ENCODE measurements at regions of chr7 and their contacts with region 1.

Region 1: DNA sequence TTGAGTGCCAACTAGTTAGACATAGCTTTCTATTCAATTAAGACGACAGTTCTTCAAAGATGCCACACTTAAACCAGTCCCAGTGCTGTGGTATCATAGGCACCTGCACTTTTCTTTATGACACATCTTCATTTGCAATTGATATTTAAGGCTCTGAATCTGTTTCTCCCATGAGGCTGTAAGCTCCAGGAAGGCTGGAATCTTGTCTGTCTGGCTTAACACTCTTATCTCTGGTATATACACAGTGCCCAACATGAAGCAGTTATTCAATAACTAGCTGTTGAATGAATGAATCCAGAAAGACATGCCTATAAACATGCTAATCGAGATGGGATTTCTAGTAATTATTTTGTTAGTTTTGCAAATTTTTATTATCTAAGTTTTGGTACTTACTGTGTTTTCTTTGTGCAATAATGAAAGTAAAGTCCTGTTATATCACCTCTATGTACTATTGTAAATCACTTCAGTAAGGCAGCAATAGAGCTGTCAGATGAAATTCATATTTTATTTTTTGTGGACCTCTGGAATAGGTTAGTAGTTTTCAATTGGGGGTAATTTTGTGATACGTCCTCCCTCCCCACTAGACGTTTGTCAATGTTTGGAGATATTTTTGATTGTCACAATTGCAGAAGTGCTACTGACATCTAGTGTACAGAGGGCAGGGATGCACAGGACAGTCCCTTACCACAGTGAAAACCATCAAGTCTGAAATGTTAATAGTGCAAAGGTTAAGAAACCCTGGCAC is 51.3 kb upstream of the STEAP4 start:
- DNase-seq: no peak
- H3K4me3 ChIP-seq: no peak overlapping the region
- H3K27ac ChIP-seq: no peak overlapping the region
- H3K4me1 ChIP-seq: no peaks in the 10 kb centered on the region
- H3K27me3 ChIP-seq: no peaks in the 10 kb centered on the region
- CTCF ChIP-seq: no peak

Region 2: DNA sequence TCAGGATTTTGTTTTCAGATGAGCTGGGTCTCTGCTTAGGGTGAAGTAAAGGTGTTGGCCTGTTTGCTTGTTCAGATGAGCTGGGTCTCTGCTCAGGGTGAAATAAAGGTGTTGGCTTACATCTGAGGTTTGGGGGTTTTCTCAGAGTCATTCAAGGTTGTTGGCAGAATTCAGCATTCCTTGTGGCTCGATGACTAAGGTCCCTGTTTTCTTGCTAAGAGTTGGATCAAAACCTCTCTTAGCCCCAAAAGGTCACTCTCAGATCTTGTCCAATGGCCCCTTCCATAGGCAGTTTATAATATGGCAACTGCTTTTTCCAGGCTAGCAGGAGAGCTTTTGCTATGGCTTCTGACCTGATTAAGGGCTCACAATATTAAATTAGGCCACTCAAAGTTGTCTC is 317.3 kb before region 1 on chr7:
- intact Hi-C with region 1: no loop called
- DNase-seq: no peak
- H3K4me3 ChIP-seq: no peak overlapping the region
- H3K27ac ChIP-seq: no peak overlapping the region
- H3K4me1 ChIP-seq: no peaks in the 10 kb centered on the region
- H3K27me3 ChIP-seq: no peaks in the 10 kb centered on the region
- CTCF ChIP-seq: no peak

Region 3: GRCh38 chr7:88243345-88243909 is 114.5 kb before region 1 on chr7:
- intact Hi-C with region 1: loop called (anchors 5 kb)
- DNase-seq: no peak
- H3K4me3 ChIP-seq: no peak overlapping the region
- H3K27ac ChIP-seq: no peak overlapping the region
- H3K4me1 ChIP-seq: no peaks in the 10 kb centered on the region
- H3K27me3 ChIP-seq: no peaks in the 10 kb centered on the region
- CTCF ChIP-seq: peak; percentile 20 to 55 (median 36)

Region 4: GRCh38 chr7:88540012-88540411 is 182.1 kb after region 1 on chr7:
- intact Hi-C with region 1: no loop called
- DNase-seq: no peak
- H3K4me3 ChIP-seq: no peak overlapping the region
- H3K27ac ChIP-seq: no peak overlapping the region
- H3K4me1 ChIP-seq: no peaks in the 10 kb centered on the region
- H3K27me3 ChIP-seq: no peaks in the 10 kb centered on the region
- CTCF ChIP-seq: no peak